Activated CD8-positive, alpha-beta T cell treated with anti-CD3 and anti-CD28 coated beads, Interleukin-2, amount 10 ng/mL, durations not matched to agents 7 days and 5 days (primary cell): ENCODE measurements at regions of chr3 and their contacts with region 1.

Region 1: DNA sequence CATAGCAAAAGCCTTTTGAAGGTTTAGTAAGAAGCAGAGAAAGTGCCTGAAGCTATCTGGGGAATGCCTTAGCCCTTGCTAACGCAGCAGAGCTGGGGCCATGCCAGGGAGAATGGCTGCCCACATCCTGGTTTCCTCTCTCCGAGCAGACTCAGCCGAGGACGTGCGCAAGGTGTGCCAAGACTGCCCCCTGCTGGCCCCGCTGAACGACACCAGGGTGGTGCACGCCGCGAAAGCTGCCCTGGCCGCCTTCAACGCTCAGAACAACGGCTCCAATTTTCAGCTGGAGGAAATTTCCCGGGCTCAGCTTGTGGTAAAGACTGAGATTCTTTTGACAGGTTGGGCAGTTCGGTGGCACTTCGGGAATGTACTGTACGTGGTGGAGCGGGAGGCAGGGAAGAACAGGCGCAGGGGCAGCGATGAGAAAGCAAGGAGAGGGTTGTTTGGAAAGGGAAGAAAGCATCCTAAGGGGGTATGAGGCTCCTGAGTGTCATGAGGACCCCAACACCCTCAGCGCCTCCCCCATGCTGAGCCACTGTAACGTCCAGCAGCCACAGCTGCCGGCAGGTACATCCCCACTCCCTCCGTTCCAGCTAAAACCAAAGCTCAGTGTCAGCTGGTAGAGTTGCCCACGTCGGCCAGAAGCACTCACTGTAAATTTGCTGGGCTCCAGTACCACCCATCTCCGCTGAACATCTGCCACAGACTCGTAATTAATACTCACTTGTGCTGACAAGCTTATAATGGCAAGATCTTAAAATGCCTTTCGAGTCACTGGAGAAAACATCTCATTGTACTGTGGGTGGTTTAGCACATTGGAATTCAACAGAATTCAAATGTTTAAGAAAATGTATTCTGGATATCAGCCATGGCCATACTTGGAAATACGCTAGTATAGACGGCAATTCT is 4.4 kb downstream of the AHSG start:
- DNase-seq: peak; percentile 88
- ATAC-seq: peak; percentile 99
- H3K4me3 Mint-ChIP-seq: peak overlapping the region; percentile 64
- H3K27ac Mint-ChIP-seq: peak overlapping the region; percentile 59
- H3K4me1 Mint-ChIP-seq: peaks cover 24% of the 10 kb centered on the region
- H3K27me3 Mint-ChIP-seq: peaks cover 49% of the 10 kb centered on the region

Region 2: DNA sequence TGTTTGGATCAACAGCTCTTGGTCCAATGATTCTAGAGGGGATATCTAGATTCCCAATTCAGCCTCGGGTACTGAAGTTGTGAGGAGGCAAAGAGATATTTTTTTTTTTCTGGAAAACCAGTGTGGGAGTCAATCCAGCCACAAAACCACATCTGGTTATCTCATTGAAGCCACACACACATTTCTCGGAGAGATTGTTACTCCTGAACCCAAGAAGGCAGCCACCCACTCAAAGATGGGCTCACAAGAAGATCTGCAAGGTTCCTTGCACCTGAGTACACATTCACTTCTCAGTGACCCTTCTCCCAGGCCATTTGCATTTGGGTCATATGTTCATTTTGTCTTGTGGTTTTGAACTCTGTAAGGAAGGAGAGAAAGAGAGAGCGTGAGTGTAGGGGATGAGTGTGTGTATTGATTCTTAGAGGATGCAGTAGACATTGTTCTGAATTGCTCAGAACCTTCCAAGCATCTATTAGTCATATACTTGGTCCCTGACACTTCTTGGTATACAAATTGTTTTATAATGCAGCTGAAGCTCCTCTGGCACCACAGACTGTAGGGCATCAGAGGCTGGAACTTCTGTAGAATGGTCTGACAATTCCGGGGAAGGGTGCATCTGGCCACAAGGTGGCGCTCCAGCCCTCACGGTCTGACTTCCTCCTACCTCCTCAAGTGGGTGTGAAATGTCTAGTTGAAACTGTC is 640.2 kb before region 1 on chr3:
- CTCF ChIA-PET with region 1: interaction called, 23 read pairs
- POLR2A ChIA-PET with region 1: no interaction called
- DNase-seq: peak; percentile 88
- ATAC-seq: peak; percentile 96
- H3K4me3 Mint-ChIP-seq: no peak overlapping the region
- H3K27ac Mint-ChIP-seq: no peak overlapping the region
- H3K4me1 Mint-ChIP-seq: peaks cover 12% of the 10 kb centered on the region
- H3K27me3 Mint-ChIP-seq: peaks cover 25% of the 10 kb centered on the region

Region 3: DNA sequence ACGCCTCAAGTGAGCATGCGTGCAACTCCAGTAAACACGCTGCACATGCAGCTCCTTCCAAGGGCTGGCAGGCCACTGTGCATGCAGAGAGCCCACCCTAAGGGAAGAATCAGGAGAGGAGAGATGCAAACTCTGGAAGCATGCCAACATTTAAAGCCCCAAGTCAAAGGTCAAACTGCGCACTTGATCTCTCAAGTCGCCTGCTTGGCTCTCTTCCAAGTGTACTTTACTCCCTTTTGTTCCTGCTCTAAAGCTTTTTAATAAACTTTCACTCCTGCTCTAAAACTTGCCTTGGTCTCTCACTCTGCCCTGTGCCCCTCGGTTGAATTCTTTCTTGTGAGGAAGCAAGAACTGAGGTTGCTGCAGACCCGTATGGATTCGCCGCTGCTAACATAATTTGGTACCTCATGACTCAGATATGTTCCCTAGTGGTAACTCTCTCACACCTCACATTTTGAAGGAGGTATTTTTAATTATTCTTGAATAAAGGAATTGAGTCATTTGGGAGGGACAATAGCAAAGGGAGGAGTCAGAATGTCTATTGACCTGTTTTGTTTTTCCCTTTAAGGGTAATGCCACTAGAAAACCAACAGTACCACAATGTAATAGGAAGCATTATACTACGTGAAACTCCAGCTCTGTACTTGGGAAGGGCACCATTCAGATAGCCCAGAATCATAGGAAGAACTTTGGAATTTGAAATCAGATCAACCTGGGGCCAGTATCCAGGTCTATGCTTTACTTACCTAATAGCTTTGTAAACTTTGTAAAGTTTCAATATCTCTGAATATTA is 235.7 kb before region 1 on chr3:
- CTCF ChIA-PET with region 1: no interaction called
- POLR2A ChIA-PET with region 1: no interaction called
- DNase-seq: no peak
- ATAC-seq: no peak
- H3K4me3 Mint-ChIP-seq: no peak overlapping the region
- H3K27ac Mint-ChIP-seq: no peak overlapping the region
- H3K4me1 Mint-ChIP-seq: peaks cover under 1% of the 10 kb centered on the region
- H3K27me3 Mint-ChIP-seq: no peaks in the 10 kb centered on the region

Region 4: DNA sequence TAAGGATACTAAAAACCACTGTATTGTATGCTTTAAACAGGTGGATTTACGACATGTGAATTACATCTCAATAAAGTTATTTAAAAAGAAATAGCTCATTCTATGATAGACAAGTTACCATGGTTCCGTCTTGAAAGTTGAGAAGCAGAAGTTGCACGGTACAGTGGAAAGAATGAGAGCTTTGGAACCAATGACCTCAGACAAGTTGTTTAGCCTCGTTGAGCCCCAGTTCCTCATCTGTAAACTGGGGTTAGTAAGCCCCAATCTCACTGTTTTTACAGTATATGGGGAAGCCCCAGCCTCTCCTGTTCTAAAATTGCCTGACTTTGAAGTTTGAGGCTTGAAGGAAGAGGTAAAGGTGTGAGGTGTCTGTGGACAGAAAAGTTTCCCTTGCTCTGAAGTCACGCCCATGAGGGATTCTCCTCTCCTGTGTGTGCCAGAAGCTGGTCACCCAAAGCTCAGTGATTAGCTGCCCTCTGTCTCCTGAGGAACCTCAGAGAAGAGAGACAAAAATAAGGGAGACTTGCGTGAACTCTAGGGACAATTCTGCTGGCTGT is 83.1 kb before region 1 on chr3:
- CTCF ChIA-PET with region 1: interaction called, 84 read pairs
- POLR2A ChIA-PET with region 1: no interaction called
- DNase-seq: peak; percentile 57
- ATAC-seq: peak; percentile 95
- H3K4me3 Mint-ChIP-seq: no peak overlapping the region
- H3K27ac Mint-ChIP-seq: no peak overlapping the region
- H3K4me1 Mint-ChIP-seq: peaks cover 35% of the 10 kb centered on the region
- H3K27me3 Mint-ChIP-seq: no peaks in the 10 kb centered on the region

Region 5: DNA sequence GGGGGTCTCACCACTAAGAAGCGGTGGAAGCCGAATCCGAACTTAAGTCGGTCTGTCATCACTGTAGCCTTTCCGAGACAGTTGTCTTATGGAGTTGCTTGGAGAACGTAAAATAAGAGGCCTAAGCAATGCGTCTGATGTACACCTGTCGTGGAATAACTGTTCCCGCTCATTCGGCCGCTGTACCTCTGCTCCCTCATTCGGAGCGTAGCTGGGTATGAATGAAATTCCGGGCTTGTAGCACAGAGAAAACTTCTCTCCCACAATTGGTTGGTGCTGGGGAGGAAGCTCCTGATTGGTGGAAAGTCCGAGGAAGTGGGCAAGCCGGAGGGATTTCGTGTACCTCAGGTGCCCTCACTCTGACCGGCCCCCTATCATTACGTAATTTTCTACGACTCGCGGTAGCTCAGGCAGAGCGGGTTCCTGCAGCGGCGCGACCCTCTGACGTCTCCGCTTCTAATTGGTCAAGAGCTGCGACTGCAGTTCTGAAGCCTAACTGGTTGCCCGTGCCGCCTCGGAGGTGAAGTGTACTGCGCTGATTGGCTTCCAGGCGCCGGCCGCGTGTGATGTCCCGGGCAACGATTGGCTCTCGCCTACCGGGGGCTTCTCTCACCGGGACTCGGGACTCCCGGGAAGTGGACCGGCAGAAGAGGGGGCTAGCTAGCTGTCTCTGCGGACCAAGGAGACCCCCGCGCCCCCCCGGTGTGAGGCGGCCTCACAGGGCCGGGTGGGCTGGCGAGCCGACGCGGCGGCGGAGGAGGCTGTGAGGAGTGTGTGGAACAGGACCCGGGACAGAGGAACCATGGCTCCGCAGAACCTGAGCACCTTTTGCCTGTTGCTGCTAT is 47.0 kb before region 1 on chr3 and contains the start of gene DNAJB11:
- CTCF ChIA-PET with region 1: interaction called, 78 read pairs
- POLR2A ChIA-PET with region 1: interaction called, 10 read pairs
- DNase-seq: peak; percentile 99
- ATAC-seq: peak; percentile 89
- H3K4me3 Mint-ChIP-seq: peak within 1 kb of the TSS; percentile 97
- H3K27ac Mint-ChIP-seq: peak within 1 kb of the TSS; percentile 99
- H3K4me1 Mint-ChIP-seq: peaks cover 60% of the 10 kb centered on the region
- H3K27me3 Mint-ChIP-seq: no peaks in the 10 kb centered on the region
- total RNA-seq, gene DNAJB11: 55.9 to 56.5 TPM

Region 6: DNA sequence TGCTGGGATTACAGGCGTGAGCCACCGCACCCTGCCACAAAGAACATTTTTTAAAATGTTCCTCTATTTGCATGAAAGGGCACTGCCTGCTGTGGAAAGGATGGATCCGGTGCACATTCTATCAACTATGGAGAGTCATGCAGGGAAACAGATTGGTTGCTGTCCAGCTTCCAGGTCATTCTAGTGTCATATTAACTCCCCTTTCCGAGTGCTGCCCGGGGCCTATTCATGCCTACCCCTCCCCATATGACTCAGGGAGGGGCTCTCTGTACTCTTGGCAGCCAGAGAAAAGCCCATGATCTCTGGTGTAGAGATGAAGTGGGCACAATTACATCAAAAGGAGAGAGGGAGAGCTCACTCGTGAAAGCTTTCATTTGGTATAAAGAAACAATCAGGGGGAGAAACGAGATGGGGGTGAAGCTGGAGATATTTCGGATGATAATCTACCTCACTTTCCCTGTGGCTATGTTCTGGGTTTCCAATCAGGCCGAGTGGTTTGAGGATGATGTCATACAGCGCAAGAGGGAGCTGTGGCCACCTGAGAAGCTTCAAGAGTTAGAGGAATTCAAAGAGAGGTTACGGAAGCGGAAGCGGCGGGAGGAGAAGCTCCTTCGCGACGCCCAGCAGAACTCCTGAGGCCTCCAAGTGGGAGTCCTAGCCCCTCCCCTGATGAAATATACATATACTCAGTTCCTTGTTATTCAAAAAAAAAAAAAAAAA is 20.6 kb before region 1 on chr3:
- CTCF ChIA-PET with region 1: interaction called, 87 read pairs
- POLR2A ChIA-PET with region 1: no interaction called
- DNase-seq: no peak
- ATAC-seq: no peak
- H3K4me3 Mint-ChIP-seq: no peak overlapping the region
- H3K27ac Mint-ChIP-seq: no peak overlapping the region
- H3K4me1 Mint-ChIP-seq: no peaks in the 10 kb centered on the region
- H3K27me3 Mint-ChIP-seq: peaks cover 4% of the 10 kb centered on the region

Region 7: GRCh38 chr3:186640473-186640818 is 23.2 kb after region 1 on chr3:
- CTCF ChIA-PET with region 1: interaction called, 45 read pairs
- POLR2A ChIA-PET with region 1: no interaction called
- DNase-seq: no peak
- ATAC-seq: no peak
- H3K4me3 Mint-ChIP-seq: no peak overlapping the region
- H3K27ac Mint-ChIP-seq: no peak overlapping the region
- H3K4me1 Mint-ChIP-seq: peaks cover 15% of the 10 kb centered on the region
- H3K27me3 Mint-ChIP-seq: peaks cover 7% of the 10 kb centered on the region

Region 8: GRCh38 chr3:186826976-186827731 is 209.9 kb after region 1 on chr3:
- CTCF ChIA-PET with region 1: interaction called, 164 read pairs
- POLR2A ChIA-PET with region 1: interaction called, 7 read pairs
- DNase-seq: peak; percentile 87
- ATAC-seq: peak; percentile 97
- H3K4me3 Mint-ChIP-seq: peak overlapping the region; percentile 70
- H3K27ac Mint-ChIP-seq: peak overlapping the region; percentile 72
- H3K4me1 Mint-ChIP-seq: peaks cover 34% of the 10 kb centered on the region
- H3K27me3 Mint-ChIP-seq: peaks cover 44% of the 10 kb centered on the region

Region 9: GRCh38 chr3:186871403-186871924 is 254.2 kb after region 1 on chr3:
- CTCF ChIA-PET with region 1: no interaction called
- POLR2A ChIA-PET with region 1: no interaction called
- DNase-seq: peak; percentile 33
- ATAC-seq: peak; percentile 65
- H3K4me3 Mint-ChIP-seq: no peak overlapping the region
- H3K27ac Mint-ChIP-seq: peak overlapping the region; percentile 78
- H3K4me1 Mint-ChIP-seq: peaks cover 26% of the 10 kb centered on the region
- H3K27me3 Mint-ChIP-seq: no peaks in the 10 kb centered on the region